Left colon (tissue), 2 donors: ENCODE measurements at regions of chr20 and their contacts with region 1.

Region 1: DNA sequence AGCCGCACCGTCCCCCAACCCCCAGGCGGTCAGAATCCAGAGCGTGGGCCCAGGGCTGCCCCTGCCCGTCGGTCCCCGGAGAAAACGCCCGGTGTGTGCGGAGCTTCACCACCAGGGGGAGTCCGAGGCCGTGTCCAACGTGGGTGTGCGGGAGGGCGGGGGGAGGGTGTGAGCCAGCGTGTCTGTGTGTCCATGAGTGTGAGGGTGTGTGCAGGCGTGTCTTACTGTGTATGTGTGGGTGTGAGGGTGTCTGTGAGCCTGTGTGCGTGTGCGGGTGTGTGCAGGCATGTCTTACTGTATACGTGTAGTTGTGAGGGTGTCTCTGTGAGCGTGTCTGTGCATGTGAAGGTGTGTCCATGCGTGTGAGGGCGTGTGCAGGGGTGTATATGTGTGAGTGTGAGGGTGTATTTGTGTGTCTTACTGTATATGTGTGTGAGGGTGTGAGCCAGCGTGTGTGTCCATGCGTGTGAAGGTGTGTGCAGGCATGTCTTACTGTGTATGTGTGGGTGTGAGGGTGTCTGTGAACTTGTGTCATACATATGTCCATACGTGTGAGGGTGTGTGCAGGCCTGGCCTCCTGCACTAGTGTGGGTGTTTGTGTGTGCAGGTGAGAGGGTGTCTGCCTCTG is 24.6 kb upstream of the GATA5 start:
- DNase-seq: peak; percentile 54 to 84
- ATAC-seq: peak; percentile 81

Region 2: GRCh38 chr20:62603021-62603906 is 102.9 kb after region 1 on chr20:
- intact Hi-C with region 1: loop called in 1 of 2 experiments (anchors 10 kb)
- DNase-seq: peak in 1 of 2 donors; percentile 57
- ATAC-seq: peak; percentile 58

Region 3: DNA sequence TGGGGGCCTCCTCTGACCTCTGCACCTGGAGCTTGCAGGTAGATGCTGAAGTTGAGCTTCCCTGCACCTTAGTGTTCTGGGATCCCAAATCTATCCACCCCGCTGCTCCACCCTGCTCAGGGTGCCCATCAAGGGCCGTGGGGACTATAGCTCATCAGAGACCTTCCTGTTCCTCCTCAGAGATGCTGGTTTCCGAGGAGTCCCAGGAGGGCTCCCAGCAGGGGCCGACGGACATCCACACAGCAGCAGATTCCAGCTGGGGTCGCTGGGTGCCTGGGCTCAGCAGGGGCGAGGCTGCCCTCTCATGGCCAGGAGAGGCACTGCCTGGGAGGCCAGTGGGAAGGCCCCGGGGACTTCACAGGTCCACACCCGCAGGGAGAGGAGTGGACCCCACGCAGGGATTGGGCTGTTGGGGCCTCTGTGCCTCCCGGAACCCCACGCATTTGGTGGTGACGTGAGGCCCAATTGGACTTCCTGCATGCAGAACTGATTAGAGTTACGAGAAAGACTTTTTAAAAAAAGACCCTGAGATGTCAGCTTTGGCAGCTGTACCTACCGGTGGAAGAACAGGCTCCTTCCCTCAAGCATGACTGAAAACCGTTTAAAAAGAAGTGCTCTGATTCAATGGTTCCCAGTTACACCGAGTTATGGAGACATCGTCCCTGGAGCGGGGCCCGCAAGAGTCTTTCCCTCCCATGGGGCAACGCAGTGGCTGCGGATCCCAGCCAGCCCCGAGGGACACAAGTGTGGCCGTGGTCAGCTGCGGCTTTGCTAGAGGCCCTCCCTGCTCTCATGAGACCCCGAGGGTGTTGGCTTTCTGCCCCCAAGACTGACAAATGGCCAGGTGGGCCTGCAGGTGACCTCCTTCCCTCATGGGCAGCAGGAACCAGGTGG is 116.6 kb after region 1 on chr20:
- intact Hi-C with region 1: loop called in 1 of 2 experiments (anchors 2 kb)
- DNase-seq: peak; percentile 58 to 81
- ATAC-seq: peak; percentile 87

Region 4: GRCh38 chr20:62668441-62669027 is 168.2 kb after region 1 on chr20:
- intact Hi-C with region 1: no loop called
- DNase-seq: peak; percentile 64 to 73
- ATAC-seq: peak; percentile 38